ENCODE measurements at regions of chr5 and their contacts with region 1.

Region 1: DNA sequence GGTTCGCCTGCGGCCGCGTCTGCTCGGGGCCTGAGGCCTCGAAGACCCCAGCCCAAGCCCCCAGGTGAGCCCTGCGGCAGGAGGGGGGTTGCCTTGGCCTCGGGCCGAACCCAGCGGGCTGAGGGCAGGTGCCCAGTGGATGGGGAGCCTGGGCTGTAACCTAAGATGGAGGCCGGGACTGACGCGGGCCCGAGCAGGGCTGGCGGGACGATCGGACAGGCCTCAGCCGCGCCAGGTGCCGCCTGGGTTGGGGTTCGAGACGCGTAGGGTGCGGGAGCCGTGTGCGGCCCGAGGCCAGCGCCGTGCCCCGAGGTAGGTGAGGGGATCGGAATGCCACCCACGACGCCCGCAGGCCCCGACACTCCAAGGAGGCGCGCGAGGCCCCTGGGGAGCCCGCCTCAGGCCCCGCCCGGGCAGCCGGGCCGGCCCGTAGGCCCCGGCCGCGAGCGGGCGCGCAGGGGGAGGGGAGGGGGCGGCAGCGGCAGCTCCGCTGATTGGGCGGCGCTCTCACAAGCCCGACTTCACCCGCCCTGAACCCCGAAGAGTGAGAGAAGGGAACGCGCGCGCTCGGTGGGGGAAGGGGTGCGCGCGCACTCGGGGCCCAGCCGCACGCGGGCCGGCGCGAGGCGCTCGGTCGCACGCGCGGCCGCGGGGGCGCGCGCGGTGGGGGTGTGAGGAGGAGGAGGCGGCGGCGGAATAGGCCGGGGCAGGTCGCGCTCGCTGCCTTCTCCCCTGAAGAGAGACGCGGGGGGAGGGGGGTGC is at the start of gene NSD1:
- DNase-seq: peak; percentile 81 to 96 (median 88)
- ATAC-seq: peak; percentile 69 to 77 (median 72)
- H3K4me3 ChIP-seq: peak within 1 kb of the TSS; percentile 63 to 66
- H3K4me3 Mint-ChIP-seq: peak within 1 kb of the TSS; percentile 84 to 85 (median 84)
- H3K27ac ChIP-seq: peak within 1 kb of the TSS; percentile 88
- H3K27ac Mint-ChIP-seq: peak within 1 kb of the TSS; percentile 89 to 91
- H3K4me1 ChIP-seq: peaks cover 36 to 52% of the 10 kb centered on the region in 2 experiments
- H3K4me1 Mint-ChIP-seq: peaks cover 58 to 67% (median 61%) of the 10 kb centered on the region in 3 donors
- H3K27me3 ChIP-seq: no peaks in the 10 kb centered on the region
- H3K27me3 Mint-ChIP-seq: no peaks in the 10 kb centered on the region
- total RNA-seq, gene NSD1: 89.5 to 113 (median 103) TPM

Region 2: DNA sequence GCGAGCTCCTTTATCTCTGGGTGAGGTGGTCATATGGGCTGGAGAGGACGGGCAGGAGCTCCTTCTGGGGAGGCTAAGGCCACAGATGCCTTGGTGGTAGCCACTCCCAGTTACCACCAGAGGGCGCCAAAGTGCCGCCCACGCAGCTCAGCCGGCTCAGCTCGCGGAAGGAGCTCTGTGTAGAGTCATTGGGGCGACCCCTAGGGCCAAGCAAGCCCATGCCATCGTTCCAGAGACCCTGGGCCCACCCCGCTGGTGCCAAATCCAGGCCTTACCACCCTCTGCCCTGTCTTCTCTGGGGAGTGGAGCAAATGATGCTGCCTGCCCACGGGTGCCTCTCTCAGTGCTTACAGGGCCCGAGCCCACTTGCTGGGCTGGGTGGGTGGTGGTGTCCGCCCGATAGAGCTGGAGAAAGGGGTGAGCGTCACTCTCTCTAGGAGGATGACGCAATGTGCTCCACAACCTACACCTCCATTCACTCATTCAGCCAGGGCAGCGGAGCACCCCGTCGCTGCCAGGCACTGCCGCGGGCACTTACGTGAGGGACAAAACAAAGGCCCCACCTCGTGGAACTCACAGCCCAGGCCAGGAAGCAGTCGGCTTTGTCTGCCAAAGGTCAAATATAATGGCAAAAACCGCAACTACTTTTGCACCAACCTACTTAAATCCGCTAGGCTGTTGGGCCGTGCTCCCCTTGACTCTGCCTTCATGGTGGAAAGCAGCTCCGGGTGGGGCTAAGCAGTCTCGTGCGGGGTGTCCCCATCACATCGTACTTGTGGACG is 472.2 kb before region 1 on chr5:
- CTCF ChIA-PET with region 1: no interaction called
- POLR2A ChIA-PET with region 1: no interaction called
- DNase-seq: peak; percentile 53 to 91 (median 69)
- ATAC-seq: peak; percentile 74 to 80 (median 78)
- H3K4me3 ChIP-seq: peak overlapping the region in 1 of 2 donors; percentile 14
- H3K4me3 Mint-ChIP-seq: peak overlapping the region in 2 of 3 donors; percentile 24 to 40
- H3K27ac ChIP-seq: no peak overlapping the region
- H3K27ac Mint-ChIP-seq: peak overlapping the region; percentile 52 to 67
- H3K4me1 ChIP-seq: peaks cover 7 to 36% of the 10 kb centered on the region in 2 experiments
- H3K4me1 Mint-ChIP-seq: peaks cover 28 to 36% (median 32%) of the 10 kb centered on the region in 3 donors
- H3K27me3 ChIP-seq: peaks cover 0 to 36% of the 10 kb centered on the region in 2 experiments
- H3K27me3 Mint-ChIP-seq: peaks cover 15 to 17% of the 10 kb centered on the region in 2 donors

Region 3: DNA sequence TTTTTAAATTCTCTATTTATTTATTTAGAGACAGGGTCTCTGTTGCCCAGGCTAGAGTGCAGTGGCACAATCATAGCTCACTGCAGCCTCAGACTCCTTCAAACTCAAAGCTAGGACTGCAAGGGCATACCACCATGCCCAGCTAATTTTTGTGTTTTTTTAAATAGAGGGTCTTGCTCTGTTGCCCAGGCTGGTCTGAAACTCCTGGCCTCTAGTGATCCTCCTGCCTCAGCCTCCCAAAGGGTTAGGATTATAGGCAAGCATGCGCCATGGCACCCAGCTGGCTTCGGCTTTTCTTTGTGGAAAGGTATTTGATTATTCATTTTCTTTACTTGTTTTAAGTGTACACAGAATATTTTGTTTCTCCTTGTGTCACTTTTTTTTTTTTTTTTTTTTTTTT is 105.6 kb before region 1 on chr5:
- CTCF ChIA-PET with region 1: no interaction called
- POLR2A ChIA-PET with region 1: interaction called in 1 of 2 experiments, 21 read pairs
- DNase-seq: no peak
- ATAC-seq: no peak
- H3K4me3 ChIP-seq: no peak overlapping the region
- H3K4me3 Mint-ChIP-seq: no peak overlapping the region
- H3K27ac ChIP-seq: no peak overlapping the region
- H3K27ac Mint-ChIP-seq: no peak overlapping the region
- H3K4me1 ChIP-seq: peaks cover 2 to 13% of the 10 kb centered on the region in 2 experiments
- H3K4me1 Mint-ChIP-seq: peaks cover 29 to 35% (median 34%) of the 10 kb centered on the region in 3 donors
- H3K27me3 ChIP-seq: no peaks in the 10 kb centered on the region
- H3K27me3 Mint-ChIP-seq: no peaks in the 10 kb centered on the region

Region 4: GRCh38 chr5:177171961-177172360 is 38.7 kb after region 1 on chr5:
- CTCF ChIA-PET with region 1: no interaction called
- POLR2A ChIA-PET with region 1: no interaction called
- DNase-seq: peak in 1 of 35 experiments; percentile 10
- ATAC-seq: peak in 1 of 4 experiments; percentile 58
- H3K4me3 ChIP-seq: no peak overlapping the region
- H3K4me3 Mint-ChIP-seq: no peak overlapping the region
- H3K27ac ChIP-seq: no peak overlapping the region
- H3K27ac Mint-ChIP-seq: peak overlapping the region in 1 of 2 donors; percentile 64
- H3K4me1 ChIP-seq: peaks cover 3 to 8% of the 10 kb centered on the region in 2 experiments
- H3K4me1 Mint-ChIP-seq: peaks cover 37 to 47% (median 41%) of the 10 kb centered on the region in 3 donors
- H3K27me3 ChIP-seq: no peaks in the 10 kb centered on the region
- H3K27me3 Mint-ChIP-seq: no peaks in the 10 kb centered on the region

Region 5: GRCh38 chr5:177578331-177578730 is 445.1 kb after region 1 on chr5:
- CTCF ChIA-PET with region 1: no interaction called
- POLR2A ChIA-PET with region 1: interaction called, 5 to 10 read pairs
- DNase-seq: no peak
- ATAC-seq: no peak
- H3K4me3 ChIP-seq: no peak overlapping the region
- H3K4me3 Mint-ChIP-seq: no peak overlapping the region
- H3K27ac ChIP-seq: no peak overlapping the region
- H3K27ac Mint-ChIP-seq: no peak overlapping the region
- H3K4me1 ChIP-seq: no peaks in the 10 kb centered on the region
- H3K4me1 Mint-ChIP-seq: no peaks in the 10 kb centered on the region
- H3K27me3 ChIP-seq: peaks cover 0 to 6% of the 10 kb centered on the region in 2 experiments
- H3K27me3 Mint-ChIP-seq: peaks cover 0 to 8% of the 10 kb centered on the region in 2 donors

Measured in T-cell (primary cell).